ENCODE measurements at regions of chr6 and their contacts with region 1.

Region 1: DNA sequence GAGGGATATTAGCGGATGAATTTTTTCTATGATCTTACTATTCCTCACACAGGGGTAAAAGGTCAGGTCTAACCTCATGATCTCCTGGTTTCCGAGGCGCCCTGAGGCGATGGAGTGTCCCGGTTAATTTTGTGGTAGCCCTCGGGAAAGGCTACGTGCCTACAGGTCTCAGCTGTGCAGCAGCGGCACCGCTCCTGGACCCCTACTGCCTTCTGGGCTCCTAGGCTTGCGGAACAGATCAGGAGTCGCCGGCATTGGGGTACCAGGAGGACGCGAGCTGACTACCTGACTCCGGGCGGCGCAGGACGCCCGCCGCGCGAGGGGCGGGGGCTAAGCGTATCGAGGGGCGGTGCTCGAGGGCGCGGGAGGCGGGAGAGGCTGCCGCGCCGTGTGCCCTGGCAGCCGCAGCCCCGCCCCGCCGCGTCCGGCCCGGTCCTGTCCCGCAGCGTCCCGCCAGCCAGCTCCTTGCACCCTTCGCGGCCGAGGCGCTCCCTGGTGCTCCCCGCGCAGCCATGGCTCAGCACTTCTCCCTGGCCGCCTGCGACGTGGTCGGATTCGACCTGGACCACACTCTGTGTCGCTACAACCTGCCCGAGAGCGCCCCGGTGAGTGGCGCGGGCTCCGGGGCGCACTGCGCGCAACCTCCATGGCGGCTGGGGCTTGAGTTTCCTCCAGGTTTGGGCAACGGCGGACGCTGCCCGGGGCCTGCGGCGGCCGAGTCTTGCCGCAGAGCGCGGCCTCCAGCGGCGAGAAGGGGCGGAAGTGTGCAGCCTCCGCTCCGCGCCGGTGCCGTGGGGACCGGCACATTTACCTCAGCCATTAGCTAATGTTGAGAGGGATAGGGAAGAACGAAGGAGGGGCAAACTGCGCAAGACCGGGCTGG is at the start of gene NT5DC1:
- DNase-seq: peak; percentile 87 to 90
- H3K4me3 ChIP-seq: peak within 1 kb of the TSS; percentile 73
- H3K4me3 Mint-ChIP-seq: peak within 1 kb of the TSS; percentile 94
- H3K27ac Mint-ChIP-seq: peak within 1 kb of the TSS; percentile 87
- H3K4me1 ChIP-seq: peaks cover 7% of the 10 kb centered on the region; the same call in 1 of the 2 replicates
- H3K4me1 Mint-ChIP-seq: peaks cover 19% of the 10 kb centered on the region
- H3K27me3 ChIP-seq: no peaks in the 10 kb centered on the region
- H3K27me3 Mint-ChIP-seq: no peaks in the 10 kb centered on the region
- CTCF ChIP-seq: peak; percentile 16 to 29
- total RNA-seq, gene NT5DC1: 54.3 and 55.0 TPM in 2 replicates

Region 2: GRCh38 chr6:116010790-116011401 is 89.8 kb before region 1 on chr6:
- CTCF ChIA-PET with region 1: interaction called, 14 read pairs
- POLR2A ChIA-PET with region 1: interaction called, 4 read pairs
- intact Hi-C with region 1: loop called (anchors 1 kb)
- DNase-seq: peak; percentile 58 to 69
- H3K4me3 ChIP-seq: no peak overlapping the region
- H3K4me3 Mint-ChIP-seq: no peak overlapping the region
- H3K27ac Mint-ChIP-seq: no peak overlapping the region
- H3K4me1 ChIP-seq: peaks cover 4% of the 10 kb centered on the region
- H3K4me1 Mint-ChIP-seq: peaks cover 10% of the 10 kb centered on the region
- H3K27me3 ChIP-seq: no peaks in the 10 kb centered on the region
- H3K27me3 Mint-ChIP-seq: no peaks in the 10 kb centered on the region
- CTCF ChIP-seq: peak; percentile 78 to 87

Region 3: DNA sequence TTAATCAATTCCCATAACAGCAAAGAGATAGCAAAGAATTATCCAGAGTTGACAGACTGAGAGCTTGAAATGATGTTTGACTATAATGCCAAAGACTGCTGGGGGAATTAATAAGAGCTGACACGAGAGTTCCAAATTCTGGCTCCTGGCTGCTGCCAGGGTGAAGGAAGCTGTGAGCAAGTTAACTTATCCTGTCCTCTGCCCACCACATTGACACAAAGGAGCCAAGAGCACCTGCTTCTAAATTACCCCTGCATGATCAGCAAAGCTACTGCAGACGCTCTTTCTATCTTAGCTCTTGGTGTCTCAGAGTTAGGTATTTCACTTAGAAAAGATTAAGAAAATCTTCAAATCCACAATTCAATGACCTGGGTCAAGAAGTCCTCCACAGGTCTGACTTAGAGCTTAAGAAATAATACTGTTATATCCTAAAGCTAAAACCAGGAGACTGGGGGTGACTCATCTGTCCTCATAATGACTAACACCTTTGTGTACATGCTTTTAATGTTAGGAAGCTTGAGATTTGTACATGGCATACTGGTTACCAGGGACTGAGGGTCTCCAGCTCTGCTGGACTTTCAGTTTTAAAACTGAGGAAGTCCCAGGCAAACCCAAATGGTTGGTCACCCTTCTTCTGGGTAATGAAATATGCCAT is 26.8 kb before region 1 on chr6:
- CTCF ChIA-PET with region 1: no interaction called
- POLR2A ChIA-PET with region 1: no interaction called
- intact Hi-C with region 1: loop called (anchors 2 kb)
- DNase-seq: no peak
- H3K4me3 ChIP-seq: no peak overlapping the region
- H3K4me3 Mint-ChIP-seq: no peak overlapping the region
- H3K27ac Mint-ChIP-seq: no peak overlapping the region
- H3K4me1 ChIP-seq: peaks cover 17% of the 10 kb centered on the region
- H3K4me1 Mint-ChIP-seq: peaks cover 7% of the 10 kb centered on the region
- H3K27me3 ChIP-seq: no peaks in the 10 kb centered on the region
- H3K27me3 Mint-ChIP-seq: no peaks in the 10 kb centered on the region
- CTCF ChIP-seq: no peak

Measured in Caco-2 (cell line).